Right ventricle myocardium inferior (tissue), 1 donor: ENCODE measurements at regions of chr10 and their contacts with region 1.

Region 1: GRCh38 chr10:13659897-13660550 is 73.3 kb downstream of the PRPF18 start:
- DNase-seq: peak; percentile 80
- ATAC-seq: peak; percentile 83

Region 2: GRCh38 chr10:13613519-13613918 is 46.5 kb before region 1 on chr10:
- intact Hi-C with region 1: loop called (anchors 5 kb)
- DNase-seq: no peak
- ATAC-seq: peak; percentile 83